PC-9 (cell line): ENCODE measurements at regions of chr10 and their contacts with region 1.

Region 1: DNA sequence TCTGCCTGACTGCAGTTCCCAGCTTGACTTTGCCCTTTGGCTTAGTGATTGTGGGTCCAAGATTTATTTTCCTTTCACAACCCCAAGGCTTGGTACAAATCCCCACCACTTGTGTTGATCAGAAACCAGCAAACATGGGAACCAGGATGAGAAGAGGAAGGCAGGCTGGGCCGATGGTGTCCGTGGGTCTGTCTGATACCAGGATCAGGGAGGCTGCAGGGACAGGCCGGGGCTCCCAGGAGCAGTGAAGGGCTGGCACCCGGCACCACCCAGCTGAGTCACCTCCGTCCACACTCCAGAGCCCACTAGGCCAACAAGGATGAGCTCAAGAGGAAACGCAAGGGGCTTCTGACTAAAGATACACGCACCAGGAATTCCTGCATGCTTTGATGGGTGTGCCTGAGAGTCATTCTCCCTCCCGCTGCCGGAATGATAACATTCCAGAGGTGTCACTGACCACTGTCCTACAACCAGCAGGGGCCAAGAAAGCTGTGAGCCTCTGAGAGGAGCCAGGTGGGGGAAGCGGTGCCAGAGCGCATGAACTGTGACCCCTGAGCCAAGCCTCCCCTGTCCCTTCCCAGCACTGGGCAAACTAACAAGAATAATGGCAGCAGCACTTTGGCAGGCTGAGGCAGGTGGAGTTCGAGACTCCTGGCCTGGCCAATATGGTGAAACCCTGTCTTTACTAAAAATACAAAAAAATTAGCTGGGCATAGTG is 29.2 kb upstream of the PROSER2 start:
- DNase-seq: peak; percentile 86 to 93
- H3K4me3 ChIP-seq: peak overlapping the region; percentile 37; the same call in 1 of the 2 replicates
- H3K27ac ChIP-seq: peak overlapping the region; percentile 88
- H3K4me1 ChIP-seq: peaks cover 17% of the 10 kb centered on the region
- H3K27me3 ChIP-seq: no peaks in the 10 kb centered on the region
- CTCF ChIP-seq: no peak

Region 2: GRCh38 chr10:11810313-11810766 is 16.4 kb after region 1 on chr10:
- CTCF ChIA-PET with region 1: interaction called, 6 read pairs
- POLR2A ChIA-PET with region 1: interaction called, 10 read pairs
- intact Hi-C with region 1: loop called (anchors 2 kb)
- DNase-seq: peak; percentile 56 to 59
- H3K4me3 ChIP-seq: no peak overlapping the region
- H3K27ac ChIP-seq: no peak overlapping the region
- H3K4me1 ChIP-seq: peaks cover 23% of the 10 kb centered on the region
- H3K27me3 ChIP-seq: no peaks in the 10 kb centered on the region
- CTCF ChIP-seq: no peak

Region 3: DNA sequence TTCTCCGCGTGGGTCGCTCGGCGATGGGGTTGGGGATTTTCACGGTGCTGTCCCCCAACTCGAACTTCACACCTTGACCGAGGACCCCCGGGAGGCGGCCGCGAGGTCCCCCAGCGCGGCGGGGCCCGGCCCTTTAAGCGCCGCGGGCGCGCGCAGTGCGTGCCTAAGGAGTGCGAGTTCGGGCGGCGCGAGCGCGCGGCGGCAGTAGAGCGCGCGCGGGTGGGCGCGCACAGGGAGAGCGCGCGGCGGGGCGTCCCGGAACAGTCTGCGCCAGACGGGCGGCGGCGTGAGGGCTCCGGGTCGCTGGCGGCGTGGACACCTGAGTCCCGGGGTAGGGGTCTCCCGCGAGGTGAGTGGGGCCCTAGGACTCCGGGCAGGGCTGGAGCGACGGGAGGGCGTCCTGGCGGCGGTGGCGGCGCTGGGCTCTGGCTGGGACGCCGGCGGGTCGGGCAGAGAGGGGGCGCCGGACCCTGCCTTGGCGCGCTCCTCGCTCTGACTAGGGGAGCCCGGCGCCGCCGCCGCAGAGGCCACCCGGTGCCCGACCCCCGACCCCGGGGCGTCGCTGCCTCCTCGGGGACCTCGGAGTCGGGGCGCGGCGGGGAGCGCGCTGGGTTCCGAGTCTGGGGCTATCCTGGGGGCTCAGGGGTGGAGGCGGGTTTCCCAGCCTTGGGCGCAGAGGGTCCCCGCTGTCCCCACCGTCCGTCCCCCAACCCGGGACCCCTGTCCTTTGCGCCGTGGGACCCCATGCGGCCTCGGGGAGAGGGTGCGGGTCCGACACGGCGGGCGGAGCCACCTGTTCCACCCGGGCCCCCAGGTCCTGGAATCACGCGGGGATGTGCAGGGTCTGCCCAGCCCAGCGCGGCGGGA is 29.4 kb after region 1 on chr10 and contains the start of gene PROSER2:
- CTCF ChIA-PET with region 1: interaction called, 5 read pairs
- POLR2A ChIA-PET with region 1: interaction called, 6 read pairs
- intact Hi-C with region 1: loop called (anchors 1 kb)
- DNase-seq: peak in 1 of 2 experiments; percentile 70
- H3K4me3 ChIP-seq: peak within 1 kb of the TSS; percentile 92
- H3K27ac ChIP-seq: peak within 1 kb of the TSS; percentile 73
- H3K4me1 ChIP-seq: peaks cover 65% of the 10 kb centered on the region
- H3K27me3 ChIP-seq: no peaks in the 10 kb centered on the region
- CTCF ChIP-seq: no peak
- total RNA-seq, gene PROSER2: 66.6 and 87.5 TPM in 2 replicates

Region 4: DNA sequence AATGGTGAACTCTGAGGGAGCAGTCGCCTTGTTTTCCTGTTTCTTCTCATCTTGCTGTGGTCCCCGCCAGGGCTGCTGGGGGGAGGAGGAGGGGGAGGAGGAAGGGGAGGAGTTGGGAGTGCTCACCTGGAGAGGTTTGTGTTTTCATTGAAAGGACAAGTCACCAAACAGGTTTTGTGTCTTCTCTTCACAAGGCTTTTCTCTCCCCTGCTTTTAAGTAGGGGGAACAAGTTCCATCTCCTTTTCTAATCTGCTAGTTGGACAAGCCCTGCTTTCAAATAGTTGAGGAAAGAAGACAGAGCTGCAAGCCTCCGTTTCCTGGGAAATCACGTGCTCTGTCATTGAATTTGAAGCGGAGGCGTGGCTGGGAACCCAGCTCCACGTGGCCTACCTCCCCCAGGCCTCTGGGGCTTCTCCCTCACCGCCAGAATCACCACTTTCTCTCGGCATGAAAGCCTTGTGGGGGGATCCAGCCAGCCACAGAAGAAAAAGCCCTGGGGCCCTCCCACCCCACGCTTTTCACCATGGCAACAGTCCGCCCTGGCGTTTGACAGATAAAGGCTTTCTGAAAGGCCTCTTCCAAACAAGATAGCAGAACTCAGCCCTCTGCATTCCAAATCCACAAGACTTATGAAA is 80.7 kb after region 1 on chr10:
- CTCF ChIA-PET with region 1: interaction called, 3 read pairs
- POLR2A ChIA-PET with region 1: interaction called, 11 read pairs
- intact Hi-C with region 1: loop called (anchors 1 kb)
- DNase-seq: peak; percentile 77 to 86
- H3K4me3 ChIP-seq: peak overlapping the region; percentile 38
- H3K27ac ChIP-seq: peak overlapping the region; percentile 100
- H3K4me1 ChIP-seq: peaks cover 63% of the 10 kb centered on the region
- H3K27me3 ChIP-seq: no peaks in the 10 kb centered on the region
- CTCF ChIP-seq: no peak

Region 5: DNA sequence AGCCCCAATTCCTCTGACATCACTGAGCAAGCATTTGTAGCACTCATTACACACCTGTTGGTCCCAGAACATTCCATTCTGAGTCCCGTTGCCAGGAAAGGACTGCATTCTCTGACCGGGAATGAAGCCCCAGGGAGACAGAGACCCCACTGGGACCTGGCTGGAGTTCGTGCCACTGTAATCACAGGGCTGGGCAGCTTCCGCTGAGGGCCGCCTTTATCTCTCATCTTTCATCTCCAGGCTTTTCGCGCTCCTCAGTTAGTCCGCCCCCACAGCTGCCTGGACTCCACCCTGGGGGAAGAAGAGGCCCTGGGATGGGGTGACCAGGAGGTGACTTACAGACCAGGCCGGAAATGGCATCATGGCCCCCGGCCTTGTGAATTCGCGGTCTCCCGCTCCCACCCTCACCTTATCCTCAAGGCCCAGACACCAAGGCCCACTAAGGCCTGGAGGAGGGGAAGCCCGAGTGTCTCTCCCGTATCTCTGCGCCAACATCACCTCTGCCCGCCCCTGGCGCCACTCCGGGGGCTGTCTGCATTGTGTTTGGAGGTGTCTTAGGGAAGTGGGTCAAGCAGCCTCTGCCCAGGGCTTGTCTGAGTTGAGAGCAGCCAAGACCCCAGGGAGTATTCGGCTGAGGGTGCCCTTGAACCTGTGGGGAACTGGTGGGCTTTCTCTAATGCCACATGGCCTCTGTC is 104.6 kb after region 1 on chr10:
- CTCF ChIA-PET with region 1: no interaction called
- POLR2A ChIA-PET with region 1: interaction called, 3 read pairs
- intact Hi-C with region 1: loop called (anchors 1 kb)
- DNase-seq: peak; percentile 91 to 94
- H3K4me3 ChIP-seq: no peak overlapping the region; the same call in 1 of the 2 replicates
- H3K27ac ChIP-seq: peak overlapping the region; percentile 99
- H3K4me1 ChIP-seq: peaks cover 33% of the 10 kb centered on the region
- H3K27me3 ChIP-seq: no peaks in the 10 kb centered on the region
- CTCF ChIP-seq: no peak

Region 6: GRCh38 chr10:11986593-11987216 is 192.8 kb after region 1 on chr10:
- CTCF ChIA-PET with region 1: interaction called, 4 read pairs
- POLR2A ChIA-PET with region 1: no interaction called
- intact Hi-C with region 1: loop called (anchors 1 kb)
- DNase-seq: peak; percentile 37 to 73
- H3K4me3 ChIP-seq: no peak overlapping the region
- H3K27ac ChIP-seq: peak overlapping the region; percentile 51
- H3K4me1 ChIP-seq: peaks cover 6% of the 10 kb centered on the region; the same call in 1 of the 2 replicates
- H3K27me3 ChIP-seq: no peaks in the 10 kb centered on the region
- CTCF ChIP-seq: peak; percentile 88

Region 7: GRCh38 chr10:12279281-12279680 is 485.4 kb after region 1 on chr10:
- CTCF ChIA-PET with region 1: interaction called, 10 read pairs
- POLR2A ChIA-PET with region 1: no interaction called
- intact Hi-C with region 1: no loop called
- DNase-seq: no peak
- H3K4me3 ChIP-seq: no peak overlapping the region
- H3K27ac ChIP-seq: no peak overlapping the region
- H3K4me1 ChIP-seq: no peaks in the 10 kb centered on the region
- H3K27me3 ChIP-seq: no peaks in the 10 kb centered on the region
- CTCF ChIP-seq: no peak